A673 (cell line): ENCODE measurements at regions of chr6 and their contacts with region 1.

Region 1: DNA sequence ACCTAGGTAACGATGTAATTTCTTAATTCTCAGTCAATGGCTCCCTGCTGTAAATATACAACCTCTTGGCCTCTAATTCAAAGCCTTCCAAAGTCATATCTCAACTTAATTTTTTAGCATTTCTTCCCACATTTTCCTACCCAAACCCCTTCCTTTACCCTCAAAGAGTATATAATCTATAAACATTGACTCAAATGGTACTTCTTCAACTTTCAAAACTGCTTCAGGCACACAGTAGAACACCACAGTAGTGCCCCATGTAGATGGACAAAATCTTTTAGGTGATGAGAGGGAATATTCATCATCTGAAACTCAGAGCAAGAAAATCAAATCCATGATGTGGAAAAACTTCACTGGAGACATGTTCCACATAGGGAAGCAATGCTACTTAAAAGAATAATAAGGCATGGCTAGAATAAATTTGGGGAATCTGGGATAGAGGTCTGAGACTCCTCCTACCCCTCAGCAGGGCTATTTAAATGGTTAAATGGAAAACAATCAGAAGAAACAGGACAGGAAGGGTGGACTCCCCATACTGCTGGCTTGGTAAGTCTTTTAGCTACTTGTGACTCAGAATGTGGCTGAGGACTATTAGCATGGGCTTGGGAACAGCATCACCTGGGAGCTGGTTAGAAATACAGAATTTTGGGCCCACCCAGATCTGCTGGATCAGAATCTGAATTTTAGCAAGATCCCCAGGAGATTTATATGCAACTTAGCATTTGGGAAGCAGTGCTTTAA is 6.4 kb downstream of the SLC22A2 start:
- DNase-seq: no peak
- H3K4me3 ChIP-seq: no peak overlapping the region
- H3K27ac ChIP-seq: no peak overlapping the region
- H3K4me1 ChIP-seq: no peaks in the 10 kb centered on the region
- H3K27me3 ChIP-seq: peaks cover 7% of the 10 kb centered on the region
- CTCF ChIP-seq: no peak

Region 2: DNA sequence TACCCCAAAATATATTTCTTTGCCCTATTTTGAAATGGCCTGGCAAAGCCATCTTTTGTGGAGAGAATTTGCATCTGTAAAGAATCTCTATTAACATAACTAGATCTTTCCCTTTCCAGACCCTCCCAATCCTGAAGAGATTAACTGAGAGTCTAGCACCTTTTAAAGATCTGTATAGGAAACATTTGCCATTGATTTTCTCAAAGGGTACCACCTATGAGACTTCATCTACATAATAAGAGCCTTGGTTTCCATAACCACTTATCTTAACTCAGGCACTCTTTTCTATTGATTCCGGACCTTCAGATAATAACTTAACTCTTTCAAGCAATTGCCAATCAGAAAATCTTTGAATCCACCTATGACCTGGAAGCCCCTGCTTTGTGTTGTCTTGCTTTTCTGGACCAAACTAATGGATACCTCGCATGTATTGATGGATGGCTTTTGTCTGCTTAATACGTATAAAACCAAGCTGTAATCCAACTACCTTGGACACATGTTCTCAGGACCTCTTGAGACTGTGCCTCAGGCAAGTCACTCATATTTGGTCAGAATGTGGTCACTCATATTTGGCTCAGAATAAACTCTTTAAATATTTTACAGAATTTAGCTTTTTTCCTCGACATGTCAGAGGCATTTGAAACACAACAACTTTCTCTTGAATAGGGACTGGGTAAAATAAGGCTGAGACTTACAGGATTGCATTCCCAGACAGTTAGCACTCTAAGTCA is 25.0 kb before region 1 on chr6:
- CTCF ChIA-PET with region 1: no interaction called
- POLR2A ChIA-PET with region 1: no interaction called
- intact Hi-C with region 1: loop called (anchors 1 kb)
- DNase-seq: no peak
- H3K4me3 ChIP-seq: no peak overlapping the region
- H3K27ac ChIP-seq: no peak overlapping the region
- H3K4me1 ChIP-seq: no peaks in the 10 kb centered on the region
- H3K27me3 ChIP-seq: no peaks in the 10 kb centered on the region
- CTCF ChIP-seq: no peak